ENCODE measurements at regions of chr5 and their contacts with region 1.

Region 1: DNA sequence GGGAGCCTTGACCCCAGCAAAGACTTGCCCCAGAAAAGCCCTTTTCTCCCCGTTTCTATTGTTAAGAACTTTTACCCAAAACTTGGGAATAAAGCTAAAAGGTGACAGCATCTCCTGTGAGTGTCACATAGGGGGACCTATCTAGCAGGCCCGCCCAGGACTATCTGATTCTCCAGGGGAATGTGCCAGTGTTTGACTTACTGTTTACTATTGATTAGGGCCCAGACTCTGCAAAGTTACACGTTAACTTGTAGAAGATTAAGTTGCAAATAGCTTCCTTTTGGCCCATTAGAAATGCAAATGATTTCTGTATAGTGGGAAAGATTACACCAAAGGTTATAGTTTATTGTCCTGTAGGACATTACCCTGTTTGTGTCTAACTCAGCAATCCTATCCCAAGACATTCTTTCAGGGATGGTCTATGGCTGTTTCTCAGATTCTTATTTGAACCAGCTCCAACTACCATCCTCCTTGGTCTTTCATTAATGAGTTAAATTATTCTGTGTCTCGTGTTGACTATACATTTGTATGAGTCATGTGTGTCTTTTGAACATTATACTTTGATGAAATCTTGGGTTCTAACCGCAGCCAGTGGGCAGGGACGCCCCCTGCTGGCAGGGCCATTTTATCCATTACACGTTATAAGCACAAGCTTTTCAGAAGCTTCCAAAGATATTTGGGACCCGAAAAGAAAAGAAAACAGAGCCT is 60.7 kb downstream of the HRH2 start:
- DNase-seq: peak in 3 of 5 donors; percentile 10 to 34 (median 18)
- H3K4me3 ChIP-seq: no peak overlapping the region
- H3K4me3 Mint-ChIP-seq: no peak overlapping the region
- H3K27ac ChIP-seq: no peak overlapping the region
- H3K27ac Mint-ChIP-seq: no peak overlapping the region
- H3K4me1 ChIP-seq: no peaks in the 10 kb centered on the region
- H3K4me1 Mint-ChIP-seq: no peaks in the 10 kb centered on the region
- H3K27me3 ChIP-seq: no peaks in the 10 kb centered on the region
- H3K27me3 Mint-ChIP-seq: peaks cover 8 to 25% of the 10 kb centered on the region in 2 donors

Region 2: GRCh38 chr5:175729829-175730277 is 11.3 kb after region 1 on chr5:
- CTCF ChIA-PET with region 1: interaction called, 14 read pairs
- POLR2A ChIA-PET with region 1: no interaction called
- DNase-seq: peak; percentile 77 to 90 (median 85)
- H3K4me3 ChIP-seq: no peak overlapping the region
- H3K4me3 Mint-ChIP-seq: peak overlapping the region in 1 of 7 donors; percentile 63
- H3K27ac ChIP-seq: no peak overlapping the region
- H3K27ac Mint-ChIP-seq: peak overlapping the region in 1 of 8 donors; percentile 14
- H3K4me1 ChIP-seq: peaks cover 7% of the 10 kb centered on the region
- H3K4me1 Mint-ChIP-seq: peaks cover 7 to 8% (median 8%) of the 10 kb centered on the region in 3 donors
- H3K27me3 ChIP-seq: peaks cover 9% of the 10 kb centered on the region
- H3K27me3 Mint-ChIP-seq: peaks cover 24 to 45% of the 10 kb centered on the region in 2 donors